ENCODE measurements at regions of chr16 and their contacts with region 1.

Region 1: GRCh38 chr16:16191493-16192167 is 31.7 kb downstream of the ABCC6 start:
- DNase-seq: no peak
- ATAC-seq: no peak
- H3K4me3 ChIP-seq: no peak overlapping the region
- H3K27ac ChIP-seq: no peak overlapping the region
- H3K4me1 ChIP-seq: no peaks in the 10 kb centered on the region
- H3K27me3 ChIP-seq: peaks cover 4% of the 10 kb centered on the region
- CTCF ChIP-seq: no peak
- POLR2A ChIP-seq: no peak
- RAD21 ChIP-seq: no peak

Region 2: DNA sequence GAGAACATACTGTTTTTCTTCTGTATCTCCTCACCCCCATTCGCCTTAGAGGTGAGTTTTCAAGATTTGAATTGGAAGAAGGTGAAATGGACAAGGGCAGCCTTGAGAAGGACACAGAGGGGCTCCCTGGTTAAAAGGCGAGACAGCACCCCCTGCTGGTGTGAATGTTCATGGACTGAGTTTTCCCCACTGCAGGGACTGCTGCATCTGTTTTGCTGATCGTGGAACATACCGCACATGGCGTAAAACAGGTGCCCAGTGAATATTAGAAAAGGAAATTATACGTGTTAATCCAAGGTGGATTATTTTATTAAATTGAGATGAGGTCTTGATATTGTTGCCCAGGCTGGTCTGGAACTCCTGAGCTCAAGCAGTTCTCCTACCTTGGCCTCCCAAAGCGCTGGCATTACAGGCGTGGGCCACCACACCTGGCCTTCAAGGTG is 487.1 kb before region 1 on chr16:
- CTCF ChIA-PET with region 1: no interaction called
- POLR2A ChIA-PET with region 1: no interaction called
- dilution Hi-C with region 1: no loop called
- in situ Hi-C with region 1: no loop called
- intact Hi-C with region 1: loop called (anchors 10 kb)
- DNase-seq: peak; percentile 69
- ATAC-seq: peak; percentile 73
- H3K4me3 ChIP-seq: no peak overlapping the region
- H3K27ac ChIP-seq: no peak overlapping the region
- H3K4me1 ChIP-seq: peaks cover 8% of the 10 kb centered on the region
- H3K27me3 ChIP-seq: no peaks in the 10 kb centered on the region
- CTCF ChIP-seq: peak; percentile 78
- POLR2A ChIP-seq: no peak
- RAD21 ChIP-seq: peak; percentile 81

Region 3: DNA sequence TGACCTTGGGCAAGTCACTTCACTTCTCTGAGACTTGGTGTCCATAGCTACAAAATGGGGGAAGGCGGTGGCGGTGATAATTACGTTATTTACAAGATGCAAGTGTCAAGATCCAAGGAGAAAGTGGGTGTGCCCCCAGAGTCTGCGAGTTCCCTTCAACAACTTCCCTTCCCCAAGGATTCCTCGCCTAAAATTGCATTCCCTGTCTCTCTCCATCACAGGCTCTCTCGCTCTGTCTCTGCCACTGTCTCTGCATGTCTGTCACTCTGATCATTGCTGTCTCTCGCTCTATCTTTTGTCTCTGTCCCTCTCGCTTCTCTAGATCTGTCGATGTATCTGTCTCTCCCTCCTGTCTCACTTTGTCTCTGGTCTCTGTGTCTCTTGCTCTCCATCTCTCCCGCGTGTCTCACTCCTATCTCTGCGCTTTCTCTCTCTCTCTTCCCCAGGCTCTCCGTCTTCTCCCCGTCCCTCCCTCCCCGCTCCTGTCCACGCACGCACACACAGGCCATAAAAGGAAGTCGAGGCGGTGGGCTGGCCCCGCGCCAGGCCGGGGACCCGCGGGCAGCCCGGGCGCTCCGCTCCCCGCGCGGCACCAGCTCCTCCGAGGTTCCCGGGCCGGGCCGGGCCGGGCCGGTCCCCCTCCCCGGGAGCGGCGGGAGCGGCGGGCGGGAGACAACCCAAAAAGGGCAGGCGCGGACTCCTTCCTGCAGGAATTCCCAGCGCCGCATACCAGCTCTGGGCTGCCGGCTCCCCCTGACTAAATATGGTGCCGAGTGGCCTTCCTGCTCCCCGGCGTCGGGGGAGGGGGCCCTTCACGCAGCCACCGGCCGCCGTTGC is 333.7 kb before region 1 on chr16:
- CTCF ChIA-PET with region 1: no interaction called
- POLR2A ChIA-PET with region 1: no interaction called
- dilution Hi-C with region 1: no loop called
- in situ Hi-C with region 1: no loop called
- intact Hi-C with region 1: no loop called
- DNase-seq: peak; percentile 50
- ATAC-seq: peak; percentile 87
- H3K4me3 ChIP-seq: peak overlapping the region; percentile 61
- H3K27ac ChIP-seq: peak overlapping the region; percentile 53
- H3K4me1 ChIP-seq: peaks cover 8% of the 10 kb centered on the region
- H3K27me3 ChIP-seq: peaks cover 30% of the 10 kb centered on the region
- CTCF ChIP-seq: no peak
- POLR2A ChIP-seq: no peak
- RAD21 ChIP-seq: no peak

Region 4: GRCh38 chr16:16143038-16143763 is 48.4 kb before region 1 on chr16:
- CTCF ChIA-PET with region 1: no interaction called
- POLR2A ChIA-PET with region 1: no interaction called
- dilution Hi-C with region 1: no loop called
- in situ Hi-C with region 1: no loop called
- intact Hi-C with region 1: no loop called
- DNase-seq: no peak
- ATAC-seq: no peak
- H3K4me3 ChIP-seq: no peak overlapping the region
- H3K27ac ChIP-seq: no peak overlapping the region
- H3K4me1 ChIP-seq: no peaks in the 10 kb centered on the region; the same call in 1 of the 2 replicates
- H3K27me3 ChIP-seq: no peaks in the 10 kb centered on the region
- CTCF ChIP-seq: 0 out of 2 replicates have a peak, but pooled peaks have one; percentile 6
- POLR2A ChIP-seq: no peak
- RAD21 ChIP-seq: no peak

Measured in IMR-90 (cell line).